OCI-LY7 (cell line): ENCODE measurements at regions of chr15 and their contacts with region 1.

Region 1: DNA sequence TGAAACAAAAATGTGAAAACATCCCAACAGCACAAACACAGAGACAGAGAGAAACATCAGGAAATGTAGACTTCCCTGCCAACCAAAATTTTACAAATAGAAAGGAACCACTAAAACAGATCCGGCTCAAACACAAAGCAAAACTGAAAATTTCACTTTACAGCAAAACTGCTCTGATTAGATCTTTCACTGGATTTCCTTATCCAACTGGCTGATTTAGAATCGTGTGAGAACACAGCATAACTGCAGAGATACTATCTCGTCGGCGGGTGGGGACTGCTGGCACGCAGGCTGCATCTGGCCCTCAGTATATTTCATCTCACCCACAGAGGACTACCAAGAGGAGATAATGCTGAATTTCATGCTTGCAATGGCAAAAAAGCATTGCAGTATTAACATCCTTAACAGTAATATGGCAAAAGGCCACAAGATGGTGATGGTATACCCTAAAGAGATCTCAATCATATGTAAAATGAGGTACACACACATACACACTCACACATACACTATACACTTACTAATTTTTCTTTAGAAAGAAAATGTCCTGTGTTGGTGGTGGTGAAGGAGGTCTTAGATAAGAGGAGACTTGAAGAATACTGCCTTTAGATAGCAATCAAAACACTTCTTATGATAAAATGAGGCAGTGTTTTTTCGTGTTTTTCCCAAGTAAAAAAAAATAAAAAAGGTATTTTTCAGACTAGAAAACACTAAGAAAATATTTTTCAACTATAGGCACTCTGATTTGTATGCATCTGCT is 10.6 kb upstream of the LEO1 start:
- DNase-seq: peak; percentile 88
- H3K4me3 ChIP-seq: peak overlapping the region; percentile 22
- H3K27ac ChIP-seq: no peak overlapping the region
- H3K4me1 ChIP-seq: peaks cover 14% of the 10 kb centered on the region
- CTCF ChIP-seq: peak; percentile 93

Region 2: DNA sequence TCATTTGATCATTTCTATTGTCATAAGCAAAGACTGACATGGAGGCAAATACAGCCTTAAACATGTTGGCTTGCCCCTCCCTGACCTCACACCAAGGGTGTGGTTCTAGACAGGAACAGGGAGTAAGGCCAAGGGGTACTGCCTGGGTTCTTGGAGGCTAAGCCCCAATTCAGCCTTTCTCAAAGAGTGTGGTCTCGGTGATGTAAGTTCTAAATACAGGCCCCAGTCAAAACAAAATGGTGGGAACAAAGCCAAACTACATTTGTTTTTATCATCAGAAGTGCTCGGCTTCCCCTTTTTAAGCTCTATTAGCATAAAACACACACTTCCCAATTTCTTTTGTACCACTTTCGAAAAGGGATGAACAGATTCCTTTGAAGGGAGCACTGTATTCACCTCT is 1992.7 kb before region 1 on chr15:
- CTCF ChIA-PET with region 1: no interaction called
- POLR2A ChIA-PET with region 1: no interaction called
- intact Hi-C with region 1: no loop called
- DNase-seq: no peak
- H3K4me3 ChIP-seq: no peak overlapping the region
- H3K27ac ChIP-seq: no peak overlapping the region
- H3K4me1 ChIP-seq: no peaks in the 10 kb centered on the region
- CTCF ChIP-seq: no peak

Region 3: GRCh38 chr15:52078876-52079700 is 96.9 kb after region 1 on chr15:
- CTCF ChIA-PET with region 1: interaction called, 8 read pairs
- POLR2A ChIA-PET with region 1: interaction called, 8 read pairs
- intact Hi-C with region 1: loop called (anchors 1 kb)
- DNase-seq: peak; percentile 87
- H3K4me3 ChIP-seq: no peak overlapping the region
- H3K27ac ChIP-seq: no peak overlapping the region
- H3K4me1 ChIP-seq: peaks cover 6% of the 10 kb centered on the region
- CTCF ChIP-seq: peak; percentile 97

Region 4: DNA sequence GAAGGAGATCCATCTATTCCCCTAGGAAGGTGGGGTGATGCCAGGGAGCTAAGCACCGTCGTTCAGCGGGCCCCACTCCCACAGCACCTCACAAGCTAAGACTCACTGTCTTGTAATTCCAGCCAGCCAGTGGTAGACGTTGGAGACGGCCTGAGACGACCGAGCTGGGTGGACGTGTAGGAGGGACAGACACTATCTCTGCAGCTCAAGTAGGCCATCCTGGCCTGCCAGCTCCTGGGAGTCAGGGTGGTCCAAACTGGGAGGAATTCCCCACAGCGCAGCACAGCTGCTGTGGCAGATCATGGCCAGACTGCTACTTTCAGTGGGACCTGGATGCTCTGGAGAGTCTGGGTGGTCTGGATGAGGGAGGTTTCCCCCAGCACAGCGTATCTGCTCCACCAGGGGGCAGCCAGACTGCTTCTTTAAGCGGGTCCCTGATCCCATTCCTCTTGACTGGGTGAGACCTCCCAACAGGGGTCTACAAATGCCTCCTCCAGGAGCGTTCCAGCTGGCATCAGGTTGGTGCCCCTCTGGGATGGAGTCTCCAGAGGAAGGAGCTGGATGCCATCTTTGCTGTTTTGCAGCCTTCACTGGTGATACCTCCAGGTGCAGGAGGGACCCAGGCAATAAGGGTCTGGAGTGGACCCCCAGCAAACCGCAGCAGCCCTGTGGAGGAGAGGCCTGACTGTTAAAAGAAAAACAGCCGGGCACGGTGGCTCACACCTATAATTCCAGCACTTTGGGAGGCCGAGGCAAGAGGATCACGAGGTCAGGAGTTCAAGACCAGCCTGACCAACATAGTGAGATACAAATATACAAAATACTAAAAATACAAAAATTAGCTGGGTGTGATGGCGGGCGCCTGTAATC is 181.4 kb after region 1 on chr15:
- CTCF ChIA-PET with region 1: no interaction called
- POLR2A ChIA-PET with region 1: no interaction called
- intact Hi-C with region 1: no loop called
- DNase-seq: peak; percentile 45
- H3K4me3 ChIP-seq: no peak overlapping the region
- H3K27ac ChIP-seq: no peak overlapping the region
- H3K4me1 ChIP-seq: peaks cover 23% of the 10 kb centered on the region
- CTCF ChIP-seq: peak; percentile 76